ENCODE measurements at regions of chr2 and their contacts with region 1.

Region 1: DNA sequence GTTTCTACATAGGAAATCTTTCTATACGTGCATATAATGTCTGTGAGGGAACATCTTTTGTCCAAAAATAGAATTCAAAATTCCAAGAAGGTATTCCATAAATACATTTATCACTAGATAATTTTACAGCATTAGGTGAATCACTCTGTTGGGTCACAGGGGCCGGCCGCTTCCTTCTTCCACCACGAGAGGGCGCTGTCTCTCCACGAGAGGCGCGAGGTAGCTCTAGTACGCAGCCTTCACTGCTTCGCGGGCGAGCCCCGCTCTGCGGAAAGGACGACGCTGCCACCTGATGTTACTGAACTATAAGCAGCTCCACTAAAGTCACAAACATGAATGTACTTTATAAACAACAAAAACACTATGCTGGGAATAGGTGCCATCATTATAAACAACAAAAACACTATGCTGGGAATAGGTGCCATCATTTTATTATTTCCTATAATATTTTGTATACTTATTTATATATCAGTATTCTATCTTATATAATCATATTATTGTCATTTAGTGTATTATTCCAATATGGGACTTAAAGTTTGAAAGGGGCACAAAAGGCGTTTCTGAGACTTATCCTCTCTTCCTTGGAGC is 69.4 kb upstream of the REV1 start:
- DNase-seq: peak; percentile 85
- H3K4me3 Mint-ChIP-seq: no peak overlapping the region
- H3K27ac Mint-ChIP-seq: no peak overlapping the region
- H3K4me1 Mint-ChIP-seq: no peaks in the 10 kb centered on the region
- H3K27me3 Mint-ChIP-seq: peaks cover 90% of the 10 kb centered on the region
- CTCF ChIP-seq: peak; percentile 98

Region 2: GRCh38 chr2:99607861-99608491 is 48.8 kb after region 1 on chr2:
- CTCF ChIA-PET with region 1: no interaction called
- intact Hi-C with region 1: no loop called
- DNase-seq: no peak
- H3K4me3 Mint-ChIP-seq: no peak overlapping the region
- H3K27ac Mint-ChIP-seq: no peak overlapping the region
- H3K4me1 Mint-ChIP-seq: no peaks in the 10 kb centered on the region
- H3K27me3 Mint-ChIP-seq: peaks cover 59% of the 10 kb centered on the region
- CTCF ChIP-seq: no peak

Region 3: DNA sequence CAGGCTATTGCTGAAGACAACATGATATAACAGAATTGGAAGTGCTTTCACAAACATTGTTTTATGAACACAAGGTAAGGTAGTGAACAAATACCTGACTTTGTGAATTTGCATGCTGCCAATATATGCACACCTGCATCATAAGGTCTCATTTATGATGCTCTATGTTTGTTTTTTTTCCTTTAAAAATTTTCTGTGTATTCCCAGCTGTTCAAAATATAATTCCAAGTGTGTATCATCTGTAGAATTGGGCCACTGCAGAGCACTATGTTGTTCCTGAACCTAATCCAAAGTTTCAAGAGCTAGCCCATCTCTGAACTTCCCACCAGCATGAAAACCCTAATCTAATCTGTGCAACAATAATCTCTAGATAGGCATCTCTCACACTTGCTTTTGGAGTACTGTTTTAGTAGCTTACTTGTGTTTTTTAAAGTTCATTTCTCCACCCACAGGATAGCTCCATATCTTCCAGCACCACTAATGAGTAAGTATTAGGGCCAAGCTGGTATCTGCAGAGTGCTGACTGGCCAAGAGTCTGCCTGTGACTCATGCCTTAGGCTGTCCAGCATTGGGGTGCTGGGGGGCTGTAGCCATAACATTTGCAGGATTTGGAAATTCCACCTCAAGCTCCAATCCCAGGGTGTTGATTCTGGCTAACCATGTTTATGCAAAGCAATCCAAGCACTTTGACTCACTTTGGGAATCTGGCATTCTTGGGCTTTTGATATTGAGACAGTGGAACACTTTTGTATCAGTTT is 138.8 kb after region 1 on chr2:
- CTCF ChIA-PET with region 1: interaction called, 5 read pairs
- intact Hi-C with region 1: loop called (anchors 10 kb)
- DNase-seq: no peak
- H3K4me3 Mint-ChIP-seq: no peak overlapping the region
- H3K27ac Mint-ChIP-seq: no peak overlapping the region
- H3K4me1 Mint-ChIP-seq: no peaks in the 10 kb centered on the region
- H3K27me3 Mint-ChIP-seq: peaks cover 18% of the 10 kb centered on the region
- CTCF ChIP-seq: no peak

Region 4: GRCh38 chr2:99818842-99819241 is 259.7 kb after region 1 on chr2:
- CTCF ChIA-PET with region 1: interaction called, 11 read pairs
- intact Hi-C with region 1: loop called (anchors 1 kb)
- DNase-seq: no peak
- H3K4me3 Mint-ChIP-seq: no peak overlapping the region
- H3K27ac Mint-ChIP-seq: no peak overlapping the region
- H3K4me1 Mint-ChIP-seq: no peaks in the 10 kb centered on the region
- H3K27me3 Mint-ChIP-seq: peaks cover 57% of the 10 kb centered on the region
- CTCF ChIP-seq: no peak

Measured in Calu3 (cell line).